HepG2 (cell line): ENCODE measurements at regions of chr5 and their contacts with region 1.

Region 1: DNA sequence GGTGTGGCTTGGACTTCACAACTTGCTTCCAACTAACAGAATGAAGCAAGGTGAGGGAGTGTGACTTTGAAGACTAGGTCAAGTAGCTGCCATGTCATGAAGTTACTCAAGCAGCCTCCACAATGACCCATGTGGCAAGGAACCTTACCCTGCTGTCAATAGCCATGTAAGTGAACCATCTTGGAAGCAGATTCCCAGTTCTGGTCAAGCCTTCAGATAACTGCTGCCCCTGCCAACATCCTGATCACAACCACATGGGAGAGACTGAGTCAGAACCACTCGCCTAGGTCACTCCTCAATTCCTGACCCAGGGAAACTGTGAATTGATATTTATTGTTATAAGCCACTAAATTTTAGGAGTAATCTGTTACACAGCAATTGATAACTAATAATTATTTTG is 10.9 kb downstream of the ZCCHC10 start:
- DNase-seq: no peak
- ATAC-seq: no peak
- H3K4me3 ChIP-seq: no peak overlapping the region
- H3K27ac ChIP-seq: no peak overlapping the region
- H3K4me1 ChIP-seq: peaks cover 22% of the 10 kb centered on the region
- H3K27me3 ChIP-seq: no peaks in the 10 kb centered on the region
- CTCF ChIP-seq: no peak
- EP300 ChIP-seq: no peak
- POLR2A ChIP-seq: no peak
- RAD21 ChIP-seq: no peak

Region 2: DNA sequence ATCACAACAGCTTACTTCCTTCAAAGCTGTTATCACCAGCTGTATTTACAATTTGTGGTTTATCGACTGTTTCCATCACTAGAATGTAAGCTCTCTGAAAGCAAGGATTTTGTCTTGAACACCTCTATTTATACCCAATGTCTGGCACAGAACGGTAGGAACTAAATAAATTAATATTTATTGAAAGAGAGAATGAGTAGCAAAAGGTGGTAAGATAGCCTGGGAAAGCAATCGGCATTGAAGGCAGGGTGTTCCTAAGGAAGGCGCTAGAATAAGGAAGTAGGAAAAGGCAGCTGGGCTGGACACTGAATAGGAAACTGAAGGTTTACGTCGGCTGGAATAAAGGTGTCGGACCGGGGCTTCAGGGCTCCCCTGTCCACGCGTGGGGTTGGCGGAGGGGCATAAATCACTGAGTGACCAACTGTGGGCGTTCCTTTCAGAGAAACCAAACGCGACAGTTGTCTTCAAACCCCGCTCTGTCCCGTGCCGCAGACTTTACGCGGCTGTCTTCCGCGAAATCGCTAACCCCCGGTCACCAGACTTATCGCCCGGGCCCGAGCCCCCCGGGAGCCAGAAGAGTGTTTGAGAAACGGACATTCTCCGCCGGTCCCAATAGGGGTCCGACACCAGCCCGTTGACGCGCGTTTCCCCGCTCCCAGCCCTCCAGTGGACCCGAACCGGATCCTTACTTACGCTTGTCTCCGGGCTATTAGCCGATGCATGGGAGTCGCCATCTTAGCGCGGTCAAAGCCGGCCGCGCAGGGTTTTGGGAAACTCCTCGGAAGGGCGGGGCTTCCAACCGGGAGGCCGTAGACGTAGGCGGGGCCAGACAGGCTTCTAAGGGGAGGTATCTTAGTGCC is 10.6 kb after region 1 on chr5 and contains the start of gene ZCCHC10:
- CTCF ChIA-PET with region 1: no interaction called
- POLR2A ChIA-PET with region 1: interaction called, 17 read pairs
- in situ Hi-C with region 1: no loop called
- intact Hi-C with region 1: no loop called
- DNase-seq: peak; percentile 86
- ATAC-seq: peak; percentile 91
- H3K4me3 ChIP-seq: peak within 1 kb of the TSS; percentile 67 to 99 (median 98)
- H3K27ac ChIP-seq: peak within 1 kb of the TSS; percentile 92
- H3K4me1 ChIP-seq: peaks cover 53% of the 10 kb centered on the region
- H3K27me3 ChIP-seq: peaks cover 0 to 2% of the 10 kb centered on the region in 2 experiments; a peak in 1 of 5 replicates
- CTCF ChIP-seq: no peak
- EP300 ChIP-seq: no peak
- POLR2A ChIP-seq: peak; percentile 70 to 80
- RAD21 ChIP-seq: peak; percentile 24; the same call in 1 of the 2 replicates
- total RNA-seq, gene ZCCHC10: 40.7 and 54.8 TPM in 2 replicates

Region 3: GRCh38 chr5:133247881-133248624 is 232.6 kb after region 1 on chr5:
- CTCF ChIA-PET with region 1: no interaction called
- POLR2A ChIA-PET with region 1: no interaction called
- in situ Hi-C with region 1: no loop called
- intact Hi-C with region 1: no loop called
- DNase-seq: peak; percentile 74
- ATAC-seq: peak; percentile 81
- H3K4me3 ChIP-seq: no peak overlapping the region
- H3K27ac ChIP-seq: no peak overlapping the region
- H3K4me1 ChIP-seq: peaks cover 66% of the 10 kb centered on the region
- H3K27me3 ChIP-seq: no peaks in the 10 kb centered on the region
- CTCF ChIP-seq: peak; percentile 88
- EP300 ChIP-seq: no peak
- POLR2A ChIP-seq: no peak
- RAD21 ChIP-seq: peak; percentile 80